Right ventricle myocardium inferior (tissue), 1 donor: ENCODE measurements at regions of chr3 and their contacts with region 1.

Region 1: DNA sequence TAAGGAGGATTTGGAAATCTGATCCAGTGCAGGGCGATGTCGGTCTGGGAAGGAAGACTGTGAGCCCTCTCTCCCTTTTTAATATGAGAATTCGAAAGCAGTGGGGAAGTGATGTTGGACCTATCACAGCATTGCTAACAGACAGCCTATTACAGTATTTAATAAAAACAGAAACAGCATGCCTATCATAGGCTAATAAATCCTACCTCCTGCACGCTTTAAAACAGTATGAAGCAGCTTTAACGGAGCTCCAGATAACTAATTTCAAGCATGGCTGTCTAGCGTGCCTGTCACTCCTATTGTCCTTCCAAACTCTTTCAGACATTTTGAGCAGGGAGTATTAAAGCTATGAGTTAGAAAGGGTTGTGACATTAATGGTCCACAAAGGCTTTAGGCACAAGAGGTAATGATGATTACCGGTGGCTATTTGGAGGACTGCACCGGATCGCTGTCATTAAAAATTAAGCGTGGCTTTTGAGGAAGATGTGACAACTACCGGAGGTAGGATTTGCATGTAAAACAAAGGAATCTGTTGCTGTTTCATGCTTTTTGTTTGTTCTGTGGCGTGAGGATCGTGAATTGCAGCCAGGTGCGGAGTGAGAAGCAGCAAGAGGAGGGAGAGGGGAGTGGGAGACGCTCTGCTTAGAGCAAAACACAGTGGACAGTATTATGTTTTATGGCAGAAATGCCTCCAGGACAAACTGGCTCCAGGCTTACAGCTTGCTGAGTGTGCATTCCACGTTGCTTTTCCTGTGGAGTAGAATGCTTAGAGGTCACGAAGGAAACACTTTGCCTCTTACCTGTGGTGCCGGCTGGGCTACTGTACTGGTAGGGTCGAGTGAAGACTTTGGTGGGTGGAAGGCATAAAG is at the start of gene KCNMB2:
- DNase-seq: no peak
- ATAC-seq: peak; percentile 91
- total RNA-seq, gene KCNMB2: 1.8 TPM

Region 2: GRCh38 chr3:178436773-178437172 is 99.7 kb before region 1 on chr3:
- intact Hi-C with region 1: loop called (anchors 5 kb)
- DNase-seq: no peak
- ATAC-seq: peak; percentile 49

Region 3: GRCh38 chr3:178568155-178568731 is 31.8 kb after region 1 on chr3:
- intact Hi-C with region 1: no loop called
- DNase-seq: no peak
- ATAC-seq: peak; percentile 46

Region 4: GRCh38 chr3:178663201-178663934 is 126.9 kb after region 1 on chr3:
- intact Hi-C with region 1: loop called (anchors 10 kb)
- DNase-seq: no peak
- ATAC-seq: no peak

Region 5: GRCh38 chr3:178676077-178676476 is 139.6 kb after region 1 on chr3:
- intact Hi-C with region 1: no loop called
- DNase-seq: no peak
- ATAC-seq: peak; percentile 93